OCI-LY7 (cell line): ENCODE measurements at regions of chr2 and their contacts with region 1.

Region 1: GRCh38 chr2:11829947-11830707 is 83.7 kb downstream of the LPIN1 start:
- DNase-seq: peak; percentile 83
- H3K4me3 ChIP-seq: peak overlapping the region; percentile 46
- H3K27ac ChIP-seq: peak overlapping the region; percentile 81
- H3K4me1 ChIP-seq: peaks cover 55% of the 10 kb centered on the region
- CTCF ChIP-seq: no peak

Region 2: GRCh38 chr2:11647834-11648600 is 182.1 kb before region 1 on chr2:
- CTCF ChIA-PET with region 1: no interaction called
- POLR2A ChIA-PET with region 1: no interaction called
- intact Hi-C with region 1: no loop called
- DNase-seq: no peak
- H3K4me3 ChIP-seq: no peak overlapping the region
- H3K27ac ChIP-seq: no peak overlapping the region
- H3K4me1 ChIP-seq: no peaks in the 10 kb centered on the region
- CTCF ChIP-seq: no peak

Region 3: GRCh38 chr2:11863513-11864328 is 33.6 kb after region 1 on chr2:
- CTCF ChIA-PET with region 1: no interaction called
- POLR2A ChIA-PET with region 1: no interaction called
- intact Hi-C with region 1: loop called (anchors 2 kb)
- DNase-seq: peak; percentile 74
- H3K4me3 ChIP-seq: no peak overlapping the region
- H3K27ac ChIP-seq: no peak overlapping the region
- H3K4me1 ChIP-seq: peaks cover 20% of the 10 kb centered on the region
- CTCF ChIP-seq: peak; percentile 93

Region 4: GRCh38 chr2:11891028-11891427 is 60.9 kb after region 1 on chr2:
- CTCF ChIA-PET with region 1: no interaction called
- POLR2A ChIA-PET with region 1: no interaction called
- intact Hi-C with region 1: no loop called
- DNase-seq: no peak
- H3K4me3 ChIP-seq: no peak overlapping the region
- H3K27ac ChIP-seq: no peak overlapping the region
- H3K4me1 ChIP-seq: no peaks in the 10 kb centered on the region
- CTCF ChIP-seq: no peak

Region 5: DNA sequence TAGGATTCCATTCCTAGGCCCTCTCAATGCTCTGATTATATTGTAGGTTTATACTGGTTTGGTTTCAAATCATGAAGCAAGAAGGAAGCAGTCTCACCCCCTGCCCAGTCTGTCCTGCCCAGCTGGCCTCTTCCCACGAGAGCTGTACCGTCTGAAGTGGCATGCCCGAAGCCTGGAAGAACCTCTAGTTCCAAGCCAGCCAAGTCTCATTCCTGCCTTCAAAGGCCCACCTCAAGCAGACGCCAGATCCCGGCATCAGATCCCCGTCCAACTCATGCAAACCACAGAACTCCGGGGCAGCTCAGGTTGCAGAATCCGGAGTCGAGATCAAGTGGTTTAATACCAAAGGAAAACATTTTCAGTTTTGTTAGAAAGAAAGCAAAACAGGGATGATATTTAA is 150.7 kb after region 1 on chr2:
- CTCF ChIA-PET with region 1: no interaction called
- POLR2A ChIA-PET with region 1: no interaction called
- intact Hi-C with region 1: no loop called
- DNase-seq: no peak
- H3K4me3 ChIP-seq: no peak overlapping the region
- H3K27ac ChIP-seq: no peak overlapping the region
- H3K4me1 ChIP-seq: peaks cover 6% of the 10 kb centered on the region
- CTCF ChIP-seq: no peak

Region 6: DNA sequence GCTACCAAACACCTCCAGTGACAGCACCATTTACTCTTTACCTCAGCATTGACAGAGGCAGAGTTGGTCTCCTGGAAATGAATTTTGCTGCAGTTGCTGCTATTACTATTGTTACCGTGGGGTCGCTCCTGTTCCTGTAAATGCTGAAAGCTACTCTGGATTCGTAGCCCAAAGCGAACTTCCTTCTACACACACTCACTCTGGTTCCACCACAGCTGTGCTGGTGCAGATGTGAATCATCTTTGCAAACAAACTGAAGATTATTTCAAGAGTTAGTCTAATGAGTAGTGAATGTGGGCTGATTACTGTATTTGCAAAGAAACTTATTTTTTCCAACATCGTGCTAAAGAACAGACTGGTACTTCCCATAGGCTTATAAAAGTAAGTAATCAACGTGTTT is 220.3 kb after region 1 on chr2:
- CTCF ChIA-PET with region 1: interaction called, 3 read pairs
- POLR2A ChIA-PET with region 1: interaction called, 5 read pairs
- intact Hi-C with region 1: loop called (anchors 1 kb)
- DNase-seq: peak; percentile 84
- H3K4me3 ChIP-seq: peak overlapping the region; percentile 1
- H3K27ac ChIP-seq: peak overlapping the region; percentile 90
- H3K4me1 ChIP-seq: peaks cover 66% of the 10 kb centered on the region
- CTCF ChIP-seq: peak; percentile 77

Region 7: GRCh38 chr2:12326449-12327190 is 496.5 kb after region 1 on chr2:
- CTCF ChIA-PET with region 1: no interaction called
- POLR2A ChIA-PET with region 1: no interaction called
- intact Hi-C with region 1: loop called (anchors 5 kb)
- DNase-seq: peak; percentile 27
- H3K4me3 ChIP-seq: no peak overlapping the region
- H3K27ac ChIP-seq: no peak overlapping the region
- H3K4me1 ChIP-seq: no peaks in the 10 kb centered on the region
- CTCF ChIP-seq: peak; percentile 51; the same call in 1 of the 2 replicates

Region 8: DNA sequence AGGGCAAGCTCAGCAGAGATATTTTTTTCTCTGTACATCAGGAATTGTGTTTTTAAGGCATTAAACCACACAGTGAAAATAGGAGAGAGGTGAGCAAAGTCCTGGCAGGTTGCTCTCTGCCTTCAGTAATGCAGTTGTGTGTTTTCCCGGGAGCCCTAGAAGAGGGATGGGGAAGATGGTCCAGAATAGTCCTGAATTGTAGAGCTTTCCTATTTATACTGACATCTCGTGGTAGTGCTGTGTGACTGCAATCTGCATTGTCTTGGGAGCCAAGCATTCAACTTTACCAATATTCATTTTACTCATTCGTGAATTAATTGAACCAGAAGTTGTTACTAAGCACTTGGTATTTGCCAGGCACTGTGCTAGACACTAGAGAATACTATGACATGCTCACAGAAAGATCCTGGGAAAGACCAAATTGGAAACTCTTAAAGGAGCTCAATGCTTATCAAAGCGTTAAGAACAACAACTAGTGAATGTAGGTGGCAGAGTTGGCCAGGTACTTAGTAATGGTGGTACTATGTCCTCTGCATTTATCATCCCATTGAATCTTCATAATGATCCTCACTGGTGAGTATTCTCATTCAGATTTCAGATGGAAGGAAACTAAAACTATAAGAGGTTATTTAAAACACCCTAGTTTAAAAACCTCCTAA is 1101.2 kb after region 1 on chr2:
- CTCF ChIA-PET with region 1: no interaction called
- POLR2A ChIA-PET with region 1: no interaction called
- intact Hi-C with region 1: loop called (anchors 2 kb)
- DNase-seq: peak; percentile 23
- H3K4me3 ChIP-seq: no peak overlapping the region
- H3K27ac ChIP-seq: no peak overlapping the region
- H3K4me1 ChIP-seq: peaks cover 22% of the 10 kb centered on the region
- CTCF ChIP-seq: peak; percentile 88